Aorta (tissue), 5 donors: ENCODE measurements at regions of chr19 and their contacts with region 1.

Region 1: DNA sequence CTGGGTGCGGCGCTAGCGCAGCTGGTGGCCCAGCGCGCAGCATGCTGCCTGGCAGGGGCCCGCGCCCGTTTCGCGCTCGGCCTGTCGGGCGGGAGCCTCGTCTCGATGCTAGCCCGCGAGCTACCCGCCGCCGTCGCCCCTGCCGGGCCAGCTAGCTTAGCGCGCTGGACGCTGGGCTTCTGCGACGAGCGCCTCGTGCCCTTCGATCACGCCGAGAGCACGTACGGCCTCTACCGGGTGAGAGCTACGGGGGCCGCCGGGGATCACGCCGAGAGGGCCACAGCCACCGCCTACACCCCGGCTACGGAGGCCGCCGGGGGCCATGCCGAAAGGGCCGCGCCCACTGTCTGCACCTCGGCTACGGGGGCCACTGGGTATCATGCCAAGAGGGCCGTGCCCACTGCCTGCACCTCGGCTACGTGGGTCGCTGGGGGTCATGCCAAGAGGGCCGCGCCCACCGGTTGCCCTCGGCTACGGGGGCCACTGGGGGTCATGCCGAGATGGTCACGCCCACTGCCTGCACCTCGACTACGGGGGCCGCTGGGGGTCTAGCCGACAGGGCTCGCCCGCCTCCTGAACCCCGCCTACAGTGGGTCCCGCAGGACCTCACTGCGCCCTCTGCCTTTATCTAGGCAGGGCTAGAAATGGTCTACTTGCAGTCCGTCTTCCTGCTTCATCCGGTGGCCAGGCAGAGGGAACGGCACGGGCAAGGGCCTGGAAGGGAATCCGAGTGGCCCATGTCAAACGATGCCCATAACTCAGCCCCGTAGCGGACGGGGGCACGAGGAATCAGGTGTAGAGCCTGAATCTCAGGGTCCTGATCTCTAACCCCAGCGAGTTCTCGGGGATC is 500 bp downstream of the PGLS start:
- DNase-seq: peak; percentile 94
- ATAC-seq: peak; percentile 92
- H3K4me3 ChIP-seq: peak overlapping the region; percentile 57 to 61
- H3K27ac ChIP-seq: peak overlapping the region; percentile 47 to 70
- H3K4me1 ChIP-seq: no peaks in the 10 kb centered on the region
- H3K27me3 ChIP-seq: no peaks in the 10 kb centered on the region

Region 2: GRCh38 chr19:17336872-17337722 is 174.9 kb before region 1 on chr19 and contains the start of gene GTPBP3:
- intact Hi-C with region 1: no loop called
- DNase-seq: peak; percentile 98
- ATAC-seq: peak; percentile 94
- H3K4me3 ChIP-seq: peak within 1 kb of the TSS; percentile 78 to 85
- H3K27ac ChIP-seq: peak within 1 kb of the TSS; percentile 90 to 95
- H3K4me1 ChIP-seq: no peaks in the 10 kb centered on the region
- H3K27me3 ChIP-seq: no peaks in the 10 kb centered on the region
- total RNA-seq, gene GTPBP3: 16.7 to 27.7 TPM

Region 3: GRCh38 chr19:17475541-17476115 is 36.3 kb before region 1 on chr19:
- intact Hi-C with region 1: loop called (anchors 5 kb)
- DNase-seq: peak in 1 of 2 donors; percentile 71
- ATAC-seq: peak; percentile 67
- H3K4me3 ChIP-seq: no peak overlapping the region
- H3K27ac ChIP-seq: peak overlapping the region in 1 of 2 donors; percentile 10
- H3K4me1 ChIP-seq: no peaks in the 10 kb centered on the region
- H3K27me3 ChIP-seq: no peaks in the 10 kb centered on the region

Region 4: GRCh38 chr19:17555480-17555928 is 43.6 kb after region 1 on chr19 and contains the start of gene COLGALT1:
- intact Hi-C with region 1: no loop called
- DNase-seq: peak; percentile 99 to 100
- ATAC-seq: peak; percentile 99
- H3K4me3 ChIP-seq: peak within 1 kb of the TSS; percentile 73 to 85
- H3K27ac ChIP-seq: no peak within 1 kb of the TSS
- H3K4me1 ChIP-seq: no peaks in the 10 kb centered on the region
- H3K27me3 ChIP-seq: no peaks in the 10 kb centered on the region
- total RNA-seq, gene COLGALT1: 67.1 to 91.2 TPM